ENCODE measurements at regions of chr19 and their contacts with region 1.

Region 1: GRCh38 chr19:12938234-12939025 is at the start of gene CALR:
- DNase-seq: peak; percentile 100
- H3K4me3 ChIP-seq: peak within 1 kb of the TSS; percentile 75 to 98 (median 93)
- H3K27ac ChIP-seq: peak within 1 kb of the TSS; percentile 66
- H3K4me1 ChIP-seq: peaks cover 25% of the 10 kb centered on the region
- H3K27me3 ChIP-seq: no peaks in the 10 kb centered on the region
- CTCF ChIP-seq: peak in 1 of 2 donors; percentile 15
- POLR2A ChIP-seq: peak; percentile 99
- total RNA-seq, gene CALR: 1,614 and 1,636 TPM in 2 replicates

Region 2: DNA sequence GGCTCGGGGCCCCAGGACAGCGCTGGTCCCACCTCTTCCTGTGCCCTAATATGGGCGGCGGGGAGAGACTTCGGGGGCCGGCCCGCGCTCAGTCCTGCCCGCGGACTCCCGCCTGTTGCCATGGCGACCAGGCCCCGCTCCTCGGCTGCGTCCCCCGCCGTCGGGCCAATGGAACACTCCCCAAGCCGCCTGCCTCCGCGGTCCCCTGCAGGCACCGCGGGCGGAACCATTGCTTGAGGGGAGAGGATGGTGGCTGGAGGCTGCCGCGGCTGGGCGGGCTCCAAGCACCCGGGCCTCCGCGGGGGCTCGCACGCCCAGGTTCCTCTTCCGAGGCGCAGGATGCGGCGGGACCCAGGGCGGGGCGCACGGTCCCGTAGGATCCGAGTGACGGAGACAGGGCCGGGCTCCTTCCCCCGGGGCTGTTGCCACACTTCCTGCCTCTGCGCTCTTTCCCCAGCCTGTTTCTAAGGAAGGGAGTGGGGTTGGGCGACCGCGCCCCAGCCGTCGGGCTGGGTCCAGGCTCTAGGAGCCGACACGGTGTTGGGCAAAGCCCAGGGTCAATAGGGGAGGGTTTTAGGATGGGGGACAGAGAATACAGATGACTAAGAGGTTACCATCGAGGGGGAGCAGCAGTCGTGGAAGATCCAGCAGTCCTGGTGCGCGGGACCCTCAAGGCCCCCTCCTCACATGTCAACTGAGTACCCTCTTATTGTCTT is 148.4 kb before region 1 on chr19:
- CTCF ChIA-PET with region 1: no interaction called
- POLR2A ChIA-PET with region 1: no interaction called
- dilution Hi-C with region 1: no loop called
- intact Hi-C with region 1: loop called (anchors 10 kb)
- DNase-seq: peak; percentile 91
- H3K4me3 ChIP-seq: peak overlapping the region; percentile 16 to 44 (median 37)
- H3K27ac ChIP-seq: peak overlapping the region; percentile 65
- H3K4me1 ChIP-seq: peaks cover 35% of the 10 kb centered on the region
- H3K27me3 ChIP-seq: no peaks in the 10 kb centered on the region
- CTCF ChIP-seq: no peak
- POLR2A ChIP-seq: no peak

Region 3: DNA sequence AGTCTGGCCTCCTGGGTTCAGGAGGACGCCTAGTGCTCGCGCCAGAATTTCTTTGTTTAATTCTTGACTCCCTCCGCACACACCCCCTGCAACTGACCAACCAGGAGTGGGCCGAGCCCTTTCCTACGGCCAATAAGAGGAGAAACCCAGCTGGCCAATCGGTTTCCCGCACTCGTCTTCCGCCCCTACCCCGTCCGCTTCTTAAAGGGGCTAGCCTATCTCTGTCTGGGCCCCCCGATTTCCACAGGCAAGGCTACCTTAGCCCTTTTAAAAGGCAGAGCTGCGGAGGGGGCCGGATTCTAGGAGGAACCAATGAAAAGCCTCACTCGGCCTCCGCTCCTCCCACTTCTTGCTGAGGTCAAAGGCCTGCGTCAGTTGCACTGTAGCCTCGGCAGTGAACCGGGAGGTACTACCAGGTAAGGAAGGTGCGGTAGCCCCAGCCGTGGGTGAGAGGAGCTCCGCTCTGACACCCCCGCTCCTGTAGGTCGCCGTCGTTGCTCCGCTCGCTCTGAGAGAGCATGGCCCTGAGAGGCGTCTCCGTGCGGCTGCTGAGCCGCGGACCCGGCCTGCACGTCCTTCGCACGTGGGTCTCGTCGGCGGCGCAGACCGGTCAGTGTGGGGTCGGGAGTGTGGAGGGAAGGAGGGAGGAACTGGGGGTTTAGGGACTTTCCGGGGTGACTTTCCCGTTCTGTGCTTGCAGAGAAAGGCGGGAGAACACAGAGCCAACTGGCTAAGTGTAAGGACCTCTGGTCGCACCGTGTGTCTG is 47.5 kb before region 1 on chr19 and contains the start of gene GCDH:
- CTCF ChIA-PET with region 1: interaction called, 5 read pairs
- POLR2A ChIA-PET with region 1: no interaction called
- dilution Hi-C with region 1: no loop called
- intact Hi-C with region 1: loop called (anchors 2 kb)
- DNase-seq: peak; percentile 99
- H3K4me3 ChIP-seq: peak within 1 kb of the TSS; percentile 40 to 79 (median 68)
- H3K27ac ChIP-seq: no peak within 1 kb of the TSS
- H3K4me1 ChIP-seq: peaks cover 10% of the 10 kb centered on the region
- H3K27me3 ChIP-seq: peaks cover 5% of the 10 kb centered on the region in 2 experiments
- CTCF ChIP-seq: no peak
- POLR2A ChIP-seq: no peak
- total RNA-seq, gene GCDH: 27.1 and 27.3 TPM in 2 replicates

Region 4: DNA sequence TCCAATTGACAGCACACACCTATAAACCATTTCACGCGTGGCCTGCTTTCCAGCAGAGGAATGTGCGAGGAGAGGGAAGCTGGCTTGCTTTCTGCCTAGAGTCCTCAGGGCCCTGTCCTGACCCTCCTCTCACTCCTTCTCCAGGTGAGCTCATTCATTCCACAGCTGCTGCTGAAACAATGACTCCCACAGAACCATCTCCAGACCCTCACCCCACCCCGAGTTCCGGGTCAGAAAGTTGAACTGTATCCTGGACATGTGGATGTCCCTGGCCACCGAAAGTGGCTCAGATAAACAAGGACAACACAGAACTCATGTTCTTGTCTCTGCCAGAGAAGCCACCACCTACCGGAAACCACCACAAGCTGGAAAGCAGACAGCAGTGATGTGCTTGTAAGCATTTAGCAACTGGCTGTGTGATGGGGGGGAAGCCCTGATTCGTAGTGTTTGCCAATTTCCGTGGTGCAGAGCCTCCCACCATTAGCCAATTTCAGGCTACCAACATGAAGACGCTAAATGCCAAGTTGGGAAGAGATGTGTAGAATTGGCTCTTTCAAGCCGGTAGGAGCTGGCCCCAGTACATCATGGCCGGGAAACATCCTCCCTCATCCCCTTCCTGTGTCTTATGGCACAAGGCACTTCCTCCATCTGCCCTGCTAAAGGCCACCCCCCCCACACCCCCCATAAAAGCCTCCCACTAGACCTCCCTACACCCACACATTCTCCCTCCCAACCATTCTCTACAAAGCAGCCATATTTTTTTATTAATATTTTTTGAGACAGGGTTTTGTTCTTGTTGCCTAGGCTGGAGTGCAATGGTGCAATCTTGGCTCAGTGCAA is 24.4 kb before region 1 on chr19:
- CTCF ChIA-PET with region 1: interaction called, 3 read pairs
- POLR2A ChIA-PET with region 1: interaction called, 6 read pairs
- dilution Hi-C with region 1: no loop called
- intact Hi-C with region 1: loop called (anchors 1 kb)
- DNase-seq: no peak
- H3K4me3 ChIP-seq: no peak overlapping the region
- H3K27ac ChIP-seq: no peak overlapping the region
- H3K4me1 ChIP-seq: no peaks in the 10 kb centered on the region
- H3K27me3 ChIP-seq: peaks cover 3% of the 10 kb centered on the region in 2 experiments
- CTCF ChIP-seq: no peak
- POLR2A ChIP-seq: no peak

Region 5: GRCh38 chr19:12965017-12965811 is 26.8 kb after region 1 on chr19:
- CTCF ChIA-PET with region 1: interaction called, 11 read pairs
- POLR2A ChIA-PET with region 1: interaction called, 3 read pairs
- dilution Hi-C with region 1: no loop called
- intact Hi-C with region 1: loop called (anchors 1 kb)
- DNase-seq: peak; percentile 74
- H3K4me3 ChIP-seq: peak overlapping the region; percentile 1 to 48 (median 45)
- H3K27ac ChIP-seq: peak overlapping the region; percentile 4
- H3K4me1 ChIP-seq: peaks cover 2% of the 10 kb centered on the region
- H3K27me3 ChIP-seq: no peaks in the 10 kb centered on the region
- CTCF ChIP-seq: peak; percentile 77 to 99
- POLR2A ChIP-seq: no peak